ENCODE measurements at regions of chr17 and their contacts with region 1.

Region 1: GRCh38 chr17:64491034-64491859 is 5.6 kb downstream of the POLG2 start:
- DNase-seq: peak in 1 of 2 experiments; percentile 70
- ATAC-seq: peak; percentile 80 to 93
- H3K4me3 ChIP-seq: no peak overlapping the region
- H3K27ac ChIP-seq: no peak overlapping the region
- H3K4me1 ChIP-seq: peaks cover 26% of the 10 kb centered on the region
- CTCF ChIP-seq: peak; percentile 84
- EP300 ChIP-seq: no peak
- POLR2A ChIP-seq: no peak
- RAD21 ChIP-seq: peak; percentile 77 to 80

Region 2: GRCh38 chr17:64448665-64449512 is 42.4 kb before region 1 on chr17 and contains the start of gene MILR1:
- CTCF ChIA-PET with region 1: interaction called, 10 read pairs
- POLR2A ChIA-PET with region 1: no interaction called
- DNase-seq: peak; percentile 56 to 75
- ATAC-seq: peak; percentile 91 to 96
- H3K4me3 ChIP-seq: no peak within 1 kb of the TSS
- H3K27ac ChIP-seq: peak within 1 kb of the TSS; percentile 12 to 66
- H3K4me1 ChIP-seq: peaks cover 17% of the 10 kb centered on the region
- CTCF ChIP-seq: no peak
- EP300 ChIP-seq: no peak
- POLR2A ChIP-seq: no peak
- RAD21 ChIP-seq: no peak
- polyA plus RNA-seq, gene MILR1: 12.2 and 12.8 TPM in 2 replicates

Region 3: GRCh38 chr17:64479650-64480049 is 11.6 kb before region 1 on chr17:
- CTCF ChIA-PET with region 1: interaction called, 60 read pairs
- POLR2A ChIA-PET with region 1: interaction called, 3 read pairs
- DNase-seq: no peak
- ATAC-seq: peak in 1 of 2 experiments; percentile 47; a peak in 2 of 6 replicates
- H3K4me3 ChIP-seq: no peak overlapping the region
- H3K27ac ChIP-seq: no peak overlapping the region
- H3K4me1 ChIP-seq: peaks cover 4% of the 10 kb centered on the region; the same call in 1 of the 3 replicates
- CTCF ChIP-seq: no peak
- EP300 ChIP-seq: no peak
- POLR2A ChIP-seq: no peak
- RAD21 ChIP-seq: no peak

Measured in A549 (cell line).